ENCODE measurements at regions of chr1 and their contacts with region 1.

Region 1: DNA sequence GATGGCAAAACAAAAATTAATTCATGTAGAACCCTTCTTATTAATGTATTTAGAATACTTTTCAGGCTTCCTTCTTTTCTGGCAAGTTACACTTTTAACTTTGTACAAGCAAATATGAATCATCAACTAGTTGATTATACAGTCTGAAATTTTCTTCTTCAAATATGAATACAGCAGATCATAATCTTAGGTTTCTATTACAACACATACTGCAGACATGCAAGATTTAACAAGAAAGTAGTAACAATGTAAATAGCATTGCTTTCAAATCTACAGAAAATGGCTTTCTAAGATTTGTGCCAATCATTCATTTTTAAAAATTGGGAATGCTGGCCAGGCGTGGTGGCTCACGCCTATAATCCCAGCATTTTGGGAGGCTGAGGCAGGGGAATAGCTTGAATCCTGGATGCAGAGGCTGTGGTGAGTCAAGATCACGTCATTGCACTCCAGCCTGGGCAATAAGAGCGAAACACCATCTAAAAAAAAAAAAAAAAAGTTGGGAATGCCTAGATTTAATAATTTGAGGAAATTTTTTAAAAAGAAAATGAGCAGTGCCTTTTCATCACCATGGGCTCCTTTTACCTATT is 68.4 kb upstream of the DPYD start:
- DNase-seq: no peak
- H3K4me3 Mint-ChIP-seq: no peak overlapping the region
- H3K27ac Mint-ChIP-seq: no peak overlapping the region
- H3K4me1 Mint-ChIP-seq: peaks cover 7% of the 10 kb centered on the region
- H3K27me3 Mint-ChIP-seq: peaks cover 21% of the 10 kb centered on the region

Region 2: DNA sequence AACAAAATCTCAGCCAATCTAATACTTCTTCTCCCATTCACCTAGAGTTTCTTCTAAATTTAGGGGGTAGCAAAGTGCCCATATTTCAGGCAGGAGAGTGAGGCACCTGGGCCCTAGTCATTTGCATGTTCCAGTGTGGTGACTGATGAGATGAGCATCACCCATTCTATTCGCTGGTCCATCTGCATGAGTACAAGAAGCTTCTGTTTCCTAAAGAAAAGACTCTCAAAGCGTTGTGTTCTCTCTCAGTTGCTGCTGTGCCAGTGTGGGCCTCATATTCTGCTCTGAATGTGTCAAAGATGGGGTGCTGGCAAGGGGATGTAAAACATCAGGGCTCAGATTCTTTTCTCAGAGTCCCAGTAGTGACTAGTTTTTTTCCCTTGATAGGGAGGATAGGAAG is 52.2 kb before region 1 on chr1:
- intact Hi-C with region 1: loop called (anchors 1 kb)
- DNase-seq: no peak
- H3K4me3 Mint-ChIP-seq: no peak overlapping the region
- H3K27ac Mint-ChIP-seq: no peak overlapping the region
- H3K4me1 Mint-ChIP-seq: peaks cover 30% of the 10 kb centered on the region
- H3K27me3 Mint-ChIP-seq: peaks cover 18% of the 10 kb centered on the region